Activated B cell treated with CpG ODN at 0.5 μM for 24 hours (primary cell): ENCODE measurements at regions of chr17 and their contacts with region 1.

Region 1: GRCh38 chr17:41966463-41967140 is at the start of gene CNP:
- DNase-seq: peak; percentile 92
- ATAC-seq: peak; percentile 85
- H3K4me3 Mint-ChIP-seq: peak within 1 kb of the TSS; percentile 82
- H3K27ac Mint-ChIP-seq: peak within 1 kb of the TSS; percentile 72
- H3K4me1 Mint-ChIP-seq: peaks cover 43% of the 10 kb centered on the region
- H3K27me3 Mint-ChIP-seq: no peaks in the 10 kb centered on the region
- CTCF ChIP-seq: no peak
- total RNA-seq, gene CNP: 47.2 and 48.0 TPM in 2 replicates

Region 2: GRCh38 chr17:41818024-41818423 is 148.6 kb before region 1 on chr17:
- CTCF ChIA-PET with region 1: no interaction called
- POLR2A ChIA-PET with region 1: interaction called, 11 read pairs
- intact Hi-C with region 1: no loop called
- DNase-seq: no peak
- ATAC-seq: no peak
- H3K4me3 Mint-ChIP-seq: no peak overlapping the region
- H3K27ac Mint-ChIP-seq: no peak overlapping the region
- H3K4me1 Mint-ChIP-seq: peaks cover 3% of the 10 kb centered on the region
- H3K27me3 Mint-ChIP-seq: peaks cover 3% of the 10 kb centered on the region
- CTCF ChIP-seq: no peak

Region 3: GRCh38 chr17:41885733-41886132 is 80.9 kb before region 1 on chr17:
- CTCF ChIA-PET with region 1: no interaction called
- POLR2A ChIA-PET with region 1: no interaction called
- intact Hi-C with region 1: no loop called
- DNase-seq: no peak
- ATAC-seq: no peak
- H3K4me3 Mint-ChIP-seq: no peak overlapping the region
- H3K27ac Mint-ChIP-seq: no peak overlapping the region
- H3K4me1 Mint-ChIP-seq: no peaks in the 10 kb centered on the region
- H3K27me3 Mint-ChIP-seq: no peaks in the 10 kb centered on the region
- CTCF ChIP-seq: no peak

Region 4: DNA sequence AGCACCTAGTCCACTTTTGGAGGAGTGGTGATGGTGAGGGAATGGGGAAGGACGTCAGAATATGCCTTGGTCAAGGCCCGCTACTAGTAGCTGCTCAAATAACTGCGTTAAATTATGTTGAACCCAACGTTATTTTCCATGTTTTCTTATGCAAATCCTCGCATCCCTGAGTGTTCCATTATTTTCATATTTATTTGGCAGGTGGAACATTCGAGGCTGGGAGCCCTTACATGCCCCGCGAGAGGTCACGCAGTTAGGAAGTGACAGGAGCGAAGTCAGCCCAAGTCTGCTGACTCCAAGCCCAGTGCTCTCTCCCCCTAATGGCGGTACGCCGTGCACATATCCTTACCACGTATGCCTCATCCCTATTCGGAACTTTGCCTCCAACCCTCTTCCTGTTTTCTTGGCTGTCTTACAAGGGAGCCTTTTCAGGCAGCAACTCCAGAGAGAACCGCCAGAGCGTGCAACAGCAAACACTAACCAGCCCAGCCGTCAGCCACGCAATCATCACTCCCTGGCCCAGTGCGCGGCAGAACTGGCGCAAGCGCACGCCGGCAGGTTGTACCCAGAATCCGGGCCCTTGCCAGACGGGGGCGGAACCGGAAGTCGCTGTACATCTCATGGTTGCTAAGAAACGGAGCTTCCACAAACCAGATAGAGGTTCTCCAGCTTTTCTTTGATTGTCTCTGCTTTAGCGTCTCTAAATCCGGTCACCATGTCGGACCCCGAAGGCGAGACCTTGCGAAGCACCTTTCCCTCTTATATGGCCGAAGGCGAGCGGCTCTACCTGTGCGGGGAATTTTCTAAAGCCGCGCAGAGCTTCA is 36.4 kb before region 1 on chr17 and contains the start of gene ODAD4:
- CTCF ChIA-PET with region 1: no interaction called
- POLR2A ChIA-PET with region 1: interaction called, 12 read pairs
- intact Hi-C with region 1: loop called (anchors 1 kb)
- DNase-seq: peak; percentile 89
- ATAC-seq: peak; percentile 98
- H3K4me3 Mint-ChIP-seq: peak within 1 kb of the TSS; percentile 94
- H3K27ac Mint-ChIP-seq: peak within 1 kb of the TSS; percentile 97
- H3K4me1 Mint-ChIP-seq: peaks cover 38% of the 10 kb centered on the region
- H3K27me3 Mint-ChIP-seq: no peaks in the 10 kb centered on the region
- CTCF ChIP-seq: no peak
- total RNA-seq, gene ODAD4: 0.56 and 1.1 TPM in 2 replicates

Region 5: GRCh38 chr17:41944943-41945342 is 21.7 kb before region 1 on chr17:
- CTCF ChIA-PET with region 1: no interaction called
- POLR2A ChIA-PET with region 1: no interaction called
- intact Hi-C with region 1: no loop called
- DNase-seq: no peak
- ATAC-seq: no peak
- H3K4me3 Mint-ChIP-seq: no peak overlapping the region
- H3K27ac Mint-ChIP-seq: no peak overlapping the region
- H3K4me1 Mint-ChIP-seq: no peaks in the 10 kb centered on the region
- H3K27me3 Mint-ChIP-seq: no peaks in the 10 kb centered on the region
- CTCF ChIP-seq: no peak

Region 6: DNA sequence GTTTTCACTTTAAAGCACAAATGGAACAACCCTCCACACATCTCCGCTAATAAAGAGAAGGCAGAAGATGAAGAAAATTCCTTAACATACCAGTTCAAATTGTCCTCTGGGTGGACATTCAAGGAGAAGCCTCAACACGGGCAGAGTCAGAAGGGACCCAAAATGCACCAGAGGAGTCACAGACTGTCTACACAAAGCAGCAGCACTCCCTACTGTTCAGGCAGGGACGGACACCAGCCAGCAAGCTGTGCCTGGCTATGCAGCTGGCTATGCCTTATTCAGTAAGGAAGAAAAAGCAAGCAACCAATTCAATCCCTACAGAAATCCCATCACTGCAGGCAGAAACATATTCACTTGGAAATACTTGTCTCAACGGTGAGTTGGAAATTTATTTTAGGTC is 42.6 kb after region 1 on chr17:
- CTCF ChIA-PET with region 1: no interaction called
- POLR2A ChIA-PET with region 1: no interaction called
- intact Hi-C with region 1: no loop called
- DNase-seq: no peak
- ATAC-seq: no peak
- H3K4me3 Mint-ChIP-seq: no peak overlapping the region
- H3K27ac Mint-ChIP-seq: no peak overlapping the region
- H3K4me1 Mint-ChIP-seq: peaks cover 47% of the 10 kb centered on the region
- H3K27me3 Mint-ChIP-seq: no peaks in the 10 kb centered on the region
- CTCF ChIP-seq: no peak

Region 7: DNA sequence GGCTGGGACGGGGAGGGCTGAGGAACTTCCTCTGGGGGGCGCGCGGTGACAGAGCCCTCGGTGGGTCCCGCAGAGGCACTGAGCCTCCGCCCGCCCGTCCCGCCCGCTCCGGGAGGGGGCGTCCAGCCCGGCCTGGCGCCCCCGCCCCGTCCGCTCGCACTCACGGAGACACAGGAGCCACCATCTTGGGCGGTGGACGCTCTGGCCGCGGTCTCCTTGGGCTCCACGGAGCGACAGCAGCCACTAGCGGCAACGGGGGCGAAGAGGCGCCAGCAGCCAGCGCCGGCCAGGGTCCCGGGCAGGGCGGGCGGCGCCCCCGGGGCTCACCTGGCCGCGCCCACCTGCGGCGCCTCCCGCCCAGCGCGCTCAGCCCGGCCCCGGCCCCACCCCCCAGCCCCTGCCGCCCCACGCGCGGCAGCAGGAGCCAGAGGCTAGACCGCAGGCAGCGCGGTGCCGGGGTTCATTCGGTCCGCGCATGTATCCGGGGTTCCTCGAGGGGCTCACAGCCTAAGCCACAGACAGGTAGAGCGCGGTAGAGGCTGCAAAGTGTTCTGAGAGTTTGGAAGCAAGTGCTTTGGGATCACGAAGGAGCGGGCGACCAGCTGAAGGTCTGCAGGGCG is 83.9 kb after region 1 on chr17 and contains the start of gene C17orf113:
- CTCF ChIA-PET with region 1: no interaction called
- POLR2A ChIA-PET with region 1: interaction called, 3 read pairs
- intact Hi-C with region 1: loop called (anchors 1 kb)
- DNase-seq: peak; percentile 52
- ATAC-seq: peak; percentile 87
- H3K4me3 Mint-ChIP-seq: peak within 1 kb of the TSS; percentile 82
- H3K27ac Mint-ChIP-seq: no peak within 1 kb of the TSS
- H3K4me1 Mint-ChIP-seq: peaks cover 9% of the 10 kb centered on the region
- H3K27me3 Mint-ChIP-seq: peaks cover 30% of the 10 kb centered on the region
- CTCF ChIP-seq: no peak
- total RNA-seq, gene C17orf113: 3.1 and 4.5 TPM in 2 replicates

Region 8: GRCh38 chr17:42112552-42113176 is 146.1 kb after region 1 on chr17 and contains the start of gene DHX58:
- CTCF ChIA-PET with region 1: interaction called, 110 read pairs
- POLR2A ChIA-PET with region 1: interaction called, 20 read pairs
- intact Hi-C with region 1: loop called (anchors 1 kb)
- DNase-seq: peak; percentile 55
- ATAC-seq: peak; percentile 76
- H3K4me3 Mint-ChIP-seq: peak within 1 kb of the TSS; percentile 80
- H3K27ac Mint-ChIP-seq: peak within 1 kb of the TSS; percentile 91
- H3K4me1 Mint-ChIP-seq: peaks cover 57% of the 10 kb centered on the region
- H3K27me3 Mint-ChIP-seq: no peaks in the 10 kb centered on the region
- CTCF ChIP-seq: no peak
- total RNA-seq, gene DHX58: 21.9 and 22.4 TPM in 2 replicates

Region 9: DNA sequence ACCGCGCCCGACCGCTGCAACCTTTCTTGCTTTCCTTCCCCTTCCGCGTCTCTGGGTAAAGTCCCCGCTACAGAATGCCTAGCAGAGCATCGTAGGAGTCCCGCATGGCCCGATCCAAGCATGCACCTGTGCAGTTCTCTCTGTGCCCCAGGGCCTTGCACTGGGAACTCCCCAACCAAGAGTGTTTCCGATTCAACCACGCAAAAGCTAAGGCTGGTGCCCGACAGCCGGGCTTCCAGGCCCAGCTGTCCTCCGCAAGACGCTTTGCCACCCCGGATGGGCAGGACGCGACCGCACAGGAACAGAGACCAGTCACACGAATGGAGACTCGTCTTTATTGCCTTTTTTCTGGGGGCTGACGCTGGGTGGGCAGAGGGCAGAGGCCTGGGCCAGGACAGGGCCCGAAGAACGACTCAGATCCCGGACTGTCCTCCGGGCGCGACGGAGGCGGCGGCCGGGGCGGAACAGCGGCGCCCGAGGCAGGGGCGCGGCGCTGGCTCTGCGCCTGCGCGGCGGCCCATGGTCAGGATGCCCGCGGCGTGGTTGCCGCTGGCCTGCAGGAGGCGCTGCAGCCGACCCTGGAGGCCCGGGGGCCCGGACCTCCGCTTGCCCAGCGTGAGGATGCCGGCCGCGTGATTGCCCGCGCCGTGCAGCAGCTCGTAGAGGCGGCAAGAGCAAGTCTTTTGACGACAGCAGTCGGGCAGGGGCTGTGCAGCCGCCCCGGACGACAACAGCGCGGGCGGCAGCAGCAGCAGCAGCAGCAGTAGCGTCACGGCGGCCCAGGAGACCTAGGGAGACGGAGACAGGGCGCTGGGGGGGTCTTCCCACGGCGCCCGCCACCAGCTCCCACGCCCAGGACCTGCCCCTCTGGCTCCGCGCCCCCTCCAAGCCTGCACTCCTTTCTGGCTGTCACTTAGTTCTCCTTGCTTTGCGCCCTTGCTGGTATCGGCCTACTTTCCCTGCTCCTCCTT is 217.4 kb after region 1 on chr17:
- CTCF ChIA-PET with region 1: interaction called, 6 read pairs
- POLR2A ChIA-PET with region 1: interaction called, 3 read pairs
- intact Hi-C with region 1: loop called (anchors 1 kb)
- DNase-seq: peak; percentile 87
- ATAC-seq: peak; percentile 64
- H3K4me3 Mint-ChIP-seq: peak overlapping the region; percentile 93
- H3K27ac Mint-ChIP-seq: peak overlapping the region; percentile 95
- H3K4me1 Mint-ChIP-seq: peaks cover 56% of the 10 kb centered on the region
- H3K27me3 Mint-ChIP-seq: no peaks in the 10 kb centered on the region
- CTCF ChIP-seq: peak; percentile 33